MCF 10A (cell line): ENCODE measurements at regions of chr12 and their contacts with region 1.

Region 1: GRCh38 chr12:122537021-122537420 is 10.0 kb downstream of the KNTC1 start:
- DNase-seq: no peak
- H3K4me3 Mint-ChIP-seq: no peak overlapping the region
- H3K27ac Mint-ChIP-seq: no peak overlapping the region
- H3K4me1 Mint-ChIP-seq: no peaks in the 10 kb centered on the region
- H3K27me3 Mint-ChIP-seq: no peaks in the 10 kb centered on the region
- CTCF ChIP-seq: no peak

Region 2: DNA sequence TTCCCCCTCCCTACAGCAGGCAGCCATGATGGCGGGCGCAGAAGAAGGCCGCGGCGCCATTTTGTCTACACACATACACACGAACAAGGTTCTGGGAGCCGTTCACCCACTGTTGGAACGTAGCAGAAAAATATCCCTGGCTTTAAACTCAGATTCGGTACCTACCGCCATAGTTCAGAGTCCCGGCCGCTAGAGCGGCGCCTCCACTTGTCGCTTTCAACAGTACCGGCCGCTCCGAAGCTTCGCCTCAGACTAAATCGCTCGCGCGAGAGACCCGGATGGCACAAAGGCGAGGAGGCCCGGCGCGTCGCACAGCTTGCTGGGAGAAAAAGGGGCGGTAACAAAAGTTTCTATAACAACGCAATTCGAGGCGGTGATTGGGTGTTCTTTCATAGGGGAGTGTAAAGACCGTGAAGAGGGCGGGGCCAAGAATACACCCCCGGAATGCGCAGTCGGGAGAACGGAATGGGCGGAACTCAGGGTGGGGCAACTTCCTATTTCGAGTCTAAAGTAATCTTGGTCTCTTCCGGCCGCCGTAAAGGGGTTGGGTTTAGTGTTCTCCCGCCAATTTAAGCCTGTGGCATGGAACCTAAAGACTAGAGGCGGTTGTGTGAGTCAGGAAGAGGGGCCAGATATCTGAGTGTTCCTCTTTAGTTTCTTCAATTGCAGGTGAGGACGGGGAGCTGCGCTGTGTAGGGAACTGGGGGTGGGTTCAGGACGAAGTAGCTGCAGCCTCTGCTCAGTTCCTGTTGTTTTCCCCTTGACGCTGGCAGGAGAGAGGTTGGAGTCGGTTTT is 10.1 kb before region 1 on chr12 and contains the starts of genes KNTC1 and RSRC2:
- CTCF ChIA-PET with region 1: interaction called, 4 read pairs
- POLR2A ChIA-PET with region 1: interaction called, 34 read pairs
- intact Hi-C with region 1: no loop called
- DNase-seq: peak; percentile 100
- H3K4me3 Mint-ChIP-seq: no peak within 1 kb of the TSS
- H3K27ac Mint-ChIP-seq: no peak within 1 kb of the TSS
- H3K4me1 Mint-ChIP-seq: peaks cover 7% of the 10 kb centered on the region
- H3K27me3 Mint-ChIP-seq: no peaks in the 10 kb centered on the region
- CTCF ChIP-seq: no peak
- total RNA-seq, gene KNTC1: 18.0 and 26.1 TPM in 2 replicates
- total RNA-seq, gene RSRC2: 74.9 and 93.4 TPM in 2 replicates

Region 3: DNA sequence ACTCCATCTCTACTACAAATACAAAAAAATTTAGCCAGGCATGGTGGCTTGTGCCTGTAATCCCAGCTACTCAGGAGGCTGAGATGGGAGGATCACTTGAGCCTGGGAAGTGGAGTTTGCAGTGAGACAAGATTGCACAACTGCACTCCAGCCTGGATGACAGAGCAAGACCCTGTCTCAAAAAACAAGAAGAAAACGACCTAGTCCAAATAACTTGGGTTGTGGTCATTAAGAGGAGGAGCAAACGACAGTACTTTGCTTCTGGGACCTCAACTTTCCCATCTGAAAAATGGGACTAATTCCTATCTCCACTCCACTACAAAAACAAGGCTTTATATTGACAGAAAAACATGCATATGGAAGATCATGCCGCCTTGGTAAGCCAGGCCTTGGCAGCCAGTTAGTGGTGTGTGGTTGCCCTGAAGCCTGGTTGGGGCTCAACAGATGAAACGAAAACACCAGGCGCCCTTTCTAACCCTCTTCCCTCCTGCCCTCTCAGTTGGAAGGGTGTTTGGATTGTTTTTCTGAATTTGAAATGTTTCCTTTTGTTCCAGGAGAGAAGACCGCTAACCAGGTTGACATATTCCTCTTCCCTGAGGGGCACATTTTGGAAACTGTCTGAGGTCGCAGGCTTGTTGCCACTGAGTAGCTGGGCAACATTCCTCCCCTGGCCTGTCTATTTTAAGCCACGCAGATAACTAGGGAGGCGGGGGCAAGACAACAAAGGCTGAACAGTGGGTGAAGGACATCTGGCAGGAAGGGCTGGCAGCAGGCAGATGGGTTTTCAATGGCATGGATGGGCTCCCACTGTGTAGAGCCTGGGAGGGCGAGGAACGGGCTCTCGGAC is 372.6 kb after region 1 on chr12:
- CTCF ChIA-PET with region 1: no interaction called
- POLR2A ChIA-PET with region 1: no interaction called
- intact Hi-C with region 1: no loop called
- DNase-seq: no peak
- H3K4me3 Mint-ChIP-seq: no peak overlapping the region
- H3K27ac Mint-ChIP-seq: no peak overlapping the region
- H3K4me1 Mint-ChIP-seq: no peaks in the 10 kb centered on the region
- H3K27me3 Mint-ChIP-seq: no peaks in the 10 kb centered on the region
- CTCF ChIP-seq: no peak